AG04449 (cell line): ENCODE measurements at regions of chr6 and their contacts with region 1.

Region 1: GRCh38 chr6:134938896-134939295 is 11.0 kb downstream of the ALDH8A1 start:
- DNase-seq: no peak
- H3K4me3 ChIP-seq: no peak overlapping the region
- CTCF ChIP-seq: no peak

Region 2: GRCh38 chr6:134123666-134124208 is 815.2 kb before region 1 on chr6:
- CTCF ChIA-PET with region 1: interaction called, 103 read pairs
- POLR2A ChIA-PET with region 1: no interaction called
- DNase-seq: no peak
- H3K4me3 ChIP-seq: no peak overlapping the region
- CTCF ChIP-seq: peak; percentile 45

Region 3: GRCh38 chr6:134161036-134161435 is 777.9 kb before region 1 on chr6:
- CTCF ChIA-PET with region 1: interaction called, 150 read pairs
- POLR2A ChIA-PET with region 1: no interaction called
- DNase-seq: no peak
- H3K4me3 ChIP-seq: no peak overlapping the region
- CTCF ChIP-seq: no peak

Region 4: GRCh38 chr6:134822920-134823709 is 115.8 kb before region 1 on chr6:
- CTCF ChIA-PET with region 1: interaction called, 75 read pairs
- POLR2A ChIA-PET with region 1: no interaction called
- DNase-seq: no peak
- H3K4me3 ChIP-seq: no peak overlapping the region
- CTCF ChIP-seq: peak; percentile 79

Region 5: GRCh38 chr6:134918418-134918961 is 20.4 kb before region 1 on chr6:
- CTCF ChIA-PET with region 1: interaction called, 27 read pairs
- POLR2A ChIA-PET with region 1: no interaction called
- DNase-seq: no peak
- H3K4me3 ChIP-seq: no peak overlapping the region
- CTCF ChIP-seq: no peak

Region 6: DNA sequence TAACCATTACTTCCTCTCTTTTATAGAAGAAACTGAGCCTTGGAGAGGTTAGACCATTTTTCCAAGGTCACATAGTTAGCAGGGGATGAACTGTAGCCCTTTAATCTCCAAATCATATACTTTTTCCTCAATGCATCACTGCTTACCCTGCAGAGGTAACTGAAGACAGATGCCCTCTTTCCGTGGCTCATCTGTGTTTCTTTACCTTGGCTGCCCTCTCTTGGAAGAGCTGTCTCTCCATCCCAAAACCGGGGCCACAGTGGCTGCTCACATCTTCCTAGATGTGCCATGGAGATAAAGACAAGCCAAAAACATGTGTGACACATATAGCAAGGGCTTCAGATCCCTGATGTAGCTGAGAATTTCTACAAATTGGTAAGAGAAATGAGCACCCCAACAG is 11.6 kb after region 1 on chr6:
- CTCF ChIA-PET with region 1: interaction called, 26 read pairs
- POLR2A ChIA-PET with region 1: no interaction called
- DNase-seq: no peak
- H3K4me3 ChIP-seq: no peak overlapping the region
- CTCF ChIP-seq: no peak

Region 7: GRCh38 chr6:135114355-135115145 is 175.7 kb after region 1 on chr6:
- CTCF ChIA-PET with region 1: no interaction called
- POLR2A ChIA-PET with region 1: no interaction called
- DNase-seq: no peak
- H3K4me3 ChIP-seq: no peak overlapping the region
- CTCF ChIP-seq: no peak

Region 8: GRCh38 chr6:136491251-136491650 is 1552.4 kb after region 1 on chr6:
- CTCF ChIA-PET with region 1: no interaction called
- POLR2A ChIA-PET with region 1: no interaction called
- DNase-seq: no peak
- H3K4me3 ChIP-seq: no peak overlapping the region
- CTCF ChIP-seq: no peak